HEK293 (cell line): ENCODE measurements at regions of chr1 and their contacts with region 1.

Region 1: DNA sequence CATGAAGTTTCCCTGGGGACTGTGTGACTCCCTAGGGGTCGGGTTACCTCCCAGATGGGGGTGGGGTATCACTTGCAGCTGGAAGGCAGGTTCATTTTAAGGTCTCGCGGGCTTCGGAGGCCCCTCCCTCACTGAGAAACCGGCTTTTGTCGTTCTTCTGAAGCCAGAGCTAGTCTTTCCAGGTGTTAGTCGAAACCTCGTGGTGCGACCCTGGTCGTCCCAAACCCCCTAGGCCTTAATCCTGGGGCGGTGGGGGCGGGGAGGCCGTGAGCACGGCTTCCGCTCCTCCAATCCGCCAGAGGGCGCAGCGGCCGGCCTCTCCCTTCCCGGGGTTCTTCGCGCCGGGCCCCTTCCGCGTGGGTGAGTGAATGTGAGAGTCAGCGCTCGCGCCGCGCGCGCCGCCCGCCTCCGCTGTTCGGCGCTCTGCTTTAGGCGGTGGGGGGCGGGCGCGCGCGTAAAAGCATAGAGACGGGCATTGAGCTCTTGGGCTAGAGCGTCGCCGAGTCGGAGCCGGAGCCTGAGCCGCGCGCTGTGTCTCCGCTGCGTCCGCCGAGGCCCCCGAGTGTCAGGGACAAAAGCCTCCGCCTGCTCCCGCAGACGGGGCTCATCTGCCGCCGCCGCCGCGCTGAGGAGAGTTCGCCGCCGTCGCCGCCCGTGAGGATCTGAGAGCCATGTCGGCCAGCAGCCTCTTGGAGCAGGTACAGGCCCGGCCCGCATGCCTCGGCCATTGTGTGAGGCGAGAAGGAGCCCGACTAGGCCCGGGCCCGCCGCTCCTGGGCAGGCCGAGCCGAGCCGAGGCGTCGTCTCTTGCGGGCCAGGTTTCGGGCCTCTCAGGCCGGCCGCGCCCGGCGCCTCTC is at the start of gene YTHDF2:
- H3K4me3 ChIP-seq: peak within 1 kb of the TSS; percentile 98
- H3K27ac ChIP-seq: peak within 1 kb of the TSS; percentile 95
- H3K4me1 ChIP-seq: no peaks in the 10 kb centered on the region; the same call in 1 of the 2 replicates
- CTCF ChIP-seq: peak; percentile 99

Region 2: DNA sequence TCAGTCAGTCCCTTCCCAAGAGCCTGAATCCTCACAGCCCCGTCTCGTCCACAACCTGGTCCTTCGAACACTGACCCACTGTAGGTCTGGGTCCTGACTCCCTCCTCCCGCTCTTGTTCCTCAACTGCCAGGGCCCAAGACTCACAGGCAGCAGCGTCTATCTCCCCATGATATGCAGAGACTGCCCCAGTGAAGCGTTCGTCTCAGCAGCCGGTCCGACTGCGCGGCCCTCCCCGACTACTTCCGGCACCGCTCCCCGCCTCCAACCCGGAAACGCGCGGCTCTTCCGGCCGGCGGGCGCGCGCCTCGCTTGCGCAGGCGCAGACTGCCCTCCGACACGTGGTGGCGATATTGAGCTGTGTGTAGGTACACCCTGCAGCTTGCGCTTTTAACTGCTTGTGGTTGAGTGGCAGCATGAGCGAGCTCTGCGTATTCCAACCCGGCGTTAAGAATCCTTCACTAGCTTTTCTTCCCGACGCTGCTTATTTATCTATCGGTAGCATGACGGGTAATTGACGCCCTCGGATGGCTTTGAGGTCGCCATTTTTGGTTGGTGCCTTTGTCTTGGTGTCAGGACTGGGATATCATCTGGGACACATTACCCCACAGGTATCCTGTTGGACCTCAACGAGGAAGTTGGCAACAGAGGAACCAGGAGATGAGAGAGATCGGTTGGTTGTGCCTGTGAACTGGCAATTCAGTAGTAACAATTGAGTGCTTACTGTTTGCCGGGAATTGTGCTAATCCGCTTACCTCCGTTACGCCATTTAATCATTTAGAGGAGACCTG is 93.6 kb before region 1 on chr1 and contains the start of gene TAF12:
- CTCF ChIA-PET with region 1: interaction called, 5 read pairs
- POLR2A ChIA-PET with region 1: interaction called, 73 read pairs
- H3K4me3 ChIP-seq: peak within 1 kb of the TSS; percentile 75
- H3K27ac ChIP-seq: peak within 1 kb of the TSS; percentile 65
- H3K4me1 ChIP-seq: no peaks in the 10 kb centered on the region; the same call in 1 of the 2 replicates
- CTCF ChIP-seq: peak; percentile 95

Region 3: DNA sequence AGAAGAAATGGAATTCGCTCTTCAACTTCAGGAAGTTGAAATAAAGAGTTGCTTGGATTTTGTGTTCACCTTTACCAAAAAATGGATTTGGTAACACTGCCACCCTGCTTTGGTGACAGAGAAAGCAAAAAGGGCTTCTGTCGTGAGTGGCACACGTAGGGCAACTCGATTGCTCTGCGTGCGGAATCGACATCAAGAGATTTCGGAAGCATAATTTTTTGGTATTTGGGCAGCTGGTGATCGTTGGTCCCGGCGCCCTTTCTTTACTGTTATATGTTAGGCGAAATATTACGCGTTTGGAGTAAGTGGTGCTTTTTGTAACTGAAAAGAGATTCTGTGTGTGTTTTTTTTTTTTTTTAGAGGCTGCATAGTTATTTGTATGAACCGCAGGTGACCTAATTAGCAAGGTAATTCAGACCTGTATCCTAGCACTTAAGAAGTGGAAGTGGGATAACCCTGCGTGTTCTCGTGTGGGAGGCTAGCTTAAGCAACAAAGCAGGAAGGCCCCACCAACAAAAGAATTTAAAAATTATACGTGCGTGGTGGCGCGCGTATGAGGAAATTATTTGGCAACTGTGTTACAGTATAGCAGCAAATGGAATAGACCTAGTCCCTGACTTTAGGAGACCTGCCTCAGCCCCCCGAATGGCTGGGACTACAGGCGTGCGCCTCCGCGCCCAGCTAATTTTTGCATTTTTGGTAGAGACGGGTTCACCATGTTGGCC is 88.0 kb before region 1 on chr1 and contains the start of gene RNU11:
- CTCF ChIA-PET with region 1: interaction called, 8 read pairs
- POLR2A ChIA-PET with region 1: interaction called, 73 read pairs
- H3K4me3 ChIP-seq: peak within 1 kb of the TSS; percentile 40
- H3K27ac ChIP-seq: peak within 1 kb of the TSS; percentile 95
- H3K4me1 ChIP-seq: no peaks in the 10 kb centered on the region
- CTCF ChIP-seq: peak; percentile 28; the same call in 1 of the 2 replicates

Region 4: DNA sequence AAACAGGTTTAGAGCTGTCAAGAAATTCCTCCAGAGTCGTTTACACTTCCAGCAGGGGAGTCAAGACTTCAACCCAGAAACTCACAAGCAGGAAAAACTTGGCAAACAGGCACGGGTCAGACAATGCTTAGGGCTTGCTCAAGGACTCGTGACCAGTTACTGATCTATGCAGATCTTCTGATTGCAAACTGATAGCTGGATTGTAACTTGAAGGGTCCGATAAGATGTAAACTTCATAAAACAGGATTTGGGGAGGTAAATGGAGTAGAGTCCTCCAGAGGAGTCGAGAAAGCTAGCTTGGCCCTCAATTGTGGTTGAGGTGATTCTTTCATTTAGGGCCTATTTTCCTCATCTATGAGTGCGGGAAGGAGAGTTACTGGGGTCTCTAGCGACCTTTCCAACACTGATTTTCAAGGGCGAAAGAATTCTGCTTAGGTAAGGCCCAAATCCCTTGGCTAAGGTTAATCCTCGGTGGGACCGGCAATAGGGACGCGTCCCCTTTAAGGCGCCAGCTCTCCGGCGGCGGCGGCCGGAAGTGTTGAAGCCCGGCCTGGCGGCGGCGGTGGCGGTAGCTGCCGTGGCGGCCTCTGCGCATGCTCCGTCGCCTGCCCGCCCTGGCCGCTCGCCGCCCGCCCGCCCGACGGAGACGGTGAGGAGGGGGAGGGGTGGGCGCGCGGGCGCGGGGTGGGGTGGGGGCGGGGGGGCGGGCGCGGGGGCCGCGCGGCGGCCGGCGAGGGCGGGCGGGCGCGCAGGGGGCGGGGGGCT is 68.3 kb before region 1 on chr1 and contains the start of gene GMEB1:
- CTCF ChIA-PET with region 1: no interaction called
- POLR2A ChIA-PET with region 1: interaction called, 35 read pairs
- H3K4me3 ChIP-seq: peak within 1 kb of the TSS; percentile 75
- H3K27ac ChIP-seq: peak within 1 kb of the TSS; percentile 95
- H3K4me1 ChIP-seq: peaks cover 4% of the 10 kb centered on the region; the same call in 1 of the 2 replicates
- CTCF ChIP-seq: no peak

Region 5: GRCh38 chr1:28718586-28719331 is 17.9 kb before region 1 on chr1:
- CTCF ChIA-PET with region 1: interaction called, 12 read pairs
- POLR2A ChIA-PET with region 1: interaction called, 9 read pairs
- H3K4me3 ChIP-seq: no peak overlapping the region
- H3K27ac ChIP-seq: no peak overlapping the region
- H3K4me1 ChIP-seq: no peaks in the 10 kb centered on the region
- CTCF ChIP-seq: no peak

Region 6: DNA sequence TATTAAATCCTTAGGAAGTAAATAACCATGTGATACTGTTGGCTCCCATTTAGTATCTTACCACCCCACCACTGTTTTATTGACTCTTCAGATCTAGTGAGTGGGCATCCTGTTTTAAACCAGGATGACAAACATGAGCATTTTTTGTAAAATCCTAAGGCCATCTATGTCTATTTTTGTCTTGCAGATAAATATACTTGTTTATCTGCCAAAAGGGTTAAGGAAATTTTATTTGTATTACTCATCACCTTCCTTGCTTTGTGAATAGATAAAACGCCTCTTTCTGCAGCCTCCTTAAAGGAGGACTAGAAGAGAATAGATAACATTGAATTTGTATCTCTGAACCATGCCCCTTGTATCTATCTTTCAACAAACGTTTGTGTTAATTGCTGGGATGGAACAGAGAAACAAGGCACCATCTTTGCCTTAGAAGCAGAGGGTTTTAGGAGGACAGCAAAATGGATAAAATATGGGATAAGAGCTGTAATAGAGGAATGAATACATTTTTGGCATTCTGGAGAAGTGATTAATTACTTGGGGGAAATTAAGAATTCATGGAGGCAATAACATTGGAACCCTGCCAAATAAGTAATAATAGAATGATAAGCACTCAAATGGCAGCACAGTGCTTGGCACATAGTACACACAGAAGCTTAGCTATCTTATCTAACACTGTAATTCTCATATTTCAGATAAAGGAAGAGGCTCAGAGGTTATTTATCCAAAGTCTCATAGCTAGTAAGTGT is 14.8 kb after region 1 on chr1:
- CTCF ChIA-PET with region 1: interaction called, 11 read pairs
- POLR2A ChIA-PET with region 1: interaction called, 14 read pairs
- H3K4me3 ChIP-seq: no peak overlapping the region
- H3K27ac ChIP-seq: no peak overlapping the region
- H3K4me1 ChIP-seq: peaks cover 18% of the 10 kb centered on the region
- CTCF ChIP-seq: no peak

Region 7: GRCh38 chr1:28865997-28866650 is 129.4 kb after region 1 on chr1:
- CTCF ChIA-PET with region 1: no interaction called
- POLR2A ChIA-PET with region 1: no interaction called
- H3K4me3 ChIP-seq: no peak overlapping the region
- H3K27ac ChIP-seq: no peak overlapping the region
- H3K4me1 ChIP-seq: no peaks in the 10 kb centered on the region; the same call in 1 of the 2 replicates
- CTCF ChIP-seq: no peak